PC-9 (cell line): ENCODE measurements at regions of chrX and their contacts with region 1.

Region 1: DNA sequence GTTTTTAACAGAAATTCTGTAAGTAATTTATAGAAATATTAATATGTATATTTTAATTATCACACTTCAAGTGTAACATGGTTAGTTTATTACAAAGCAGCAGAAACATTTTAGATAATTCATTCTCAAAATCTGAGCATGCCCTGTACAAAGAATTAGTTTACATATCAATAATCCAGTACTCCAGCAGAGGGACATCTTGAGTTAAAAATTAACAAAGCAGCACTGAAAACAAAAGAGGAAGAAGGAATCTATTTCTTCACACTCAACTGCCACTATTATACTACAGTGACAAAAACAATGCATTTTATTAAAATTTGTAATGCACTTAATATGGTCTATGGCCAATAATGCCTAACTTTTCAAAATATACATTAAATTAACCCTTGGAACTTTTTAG is 179.1 kb upstream of the KLHL4 start:
- DNase-seq: no peak
- H3K4me3 ChIP-seq: no peak overlapping the region
- H3K27ac ChIP-seq: no peak overlapping the region
- H3K4me1 ChIP-seq: no peaks in the 10 kb centered on the region
- H3K27me3 ChIP-seq: no peaks in the 10 kb centered on the region
- CTCF ChIP-seq: peak; percentile 32; the same call in 1 of the 2 replicates

Region 2: GRCh38 chrX:87299563-87300160 is 38.8 kb before region 1 on chrX:
- CTCF ChIA-PET with region 1: no interaction called
- POLR2A ChIA-PET with region 1: no interaction called
- intact Hi-C with region 1: no loop called
- DNase-seq: no peak
- H3K4me3 ChIP-seq: no peak overlapping the region
- H3K27ac ChIP-seq: no peak overlapping the region
- H3K4me1 ChIP-seq: no peaks in the 10 kb centered on the region
- H3K27me3 ChIP-seq: no peaks in the 10 kb centered on the region
- CTCF ChIP-seq: peak; percentile 64

Region 3: DNA sequence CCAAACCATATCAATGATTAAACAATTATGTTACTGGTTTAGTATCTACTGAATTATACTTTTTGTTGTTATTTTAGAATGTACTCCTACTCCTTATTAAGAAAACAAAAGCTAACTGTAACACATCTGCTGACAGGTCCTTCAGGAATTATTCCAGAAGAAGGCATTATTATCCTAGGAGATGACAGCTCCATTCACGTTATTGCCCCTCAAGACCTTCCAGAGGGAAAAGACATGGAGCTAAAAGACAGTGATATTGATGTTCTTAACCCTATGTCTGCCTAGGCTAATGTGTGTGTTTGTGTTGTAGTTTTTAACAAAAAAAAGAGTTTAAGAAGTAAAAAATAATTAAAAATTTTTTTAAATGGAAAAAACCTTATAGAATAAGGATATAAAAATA is 27.7 kb before region 1 on chrX:
- CTCF ChIA-PET with region 1: no interaction called
- POLR2A ChIA-PET with region 1: no interaction called
- intact Hi-C with region 1: no loop called
- DNase-seq: no peak
- H3K4me3 ChIP-seq: no peak overlapping the region
- H3K27ac ChIP-seq: no peak overlapping the region
- H3K4me1 ChIP-seq: no peaks in the 10 kb centered on the region
- H3K27me3 ChIP-seq: no peaks in the 10 kb centered on the region
- CTCF ChIP-seq: no peak

Region 4: GRCh38 chrX:87583679-87584078 is 245.2 kb after region 1 on chrX:
- CTCF ChIA-PET with region 1: no interaction called
- POLR2A ChIA-PET with region 1: no interaction called
- intact Hi-C with region 1: loop called (anchors 5 kb)
- DNase-seq: peak in 1 of 2 experiments; percentile 2
- H3K4me3 ChIP-seq: no peak overlapping the region
- H3K27ac ChIP-seq: no peak overlapping the region
- H3K4me1 ChIP-seq: no peaks in the 10 kb centered on the region
- H3K27me3 ChIP-seq: no peaks in the 10 kb centered on the region
- CTCF ChIP-seq: peak; percentile 65

Region 5: GRCh38 chrX:87664381-87664780 is 325.9 kb after region 1 on chrX:
- CTCF ChIA-PET with region 1: interaction called, 3 read pairs
- POLR2A ChIA-PET with region 1: no interaction called
- intact Hi-C with region 1: loop called (anchors 1 kb)
- DNase-seq: no peak
- H3K4me3 ChIP-seq: no peak overlapping the region
- H3K27ac ChIP-seq: no peak overlapping the region
- H3K4me1 ChIP-seq: no peaks in the 10 kb centered on the region
- H3K27me3 ChIP-seq: no peaks in the 10 kb centered on the region
- CTCF ChIP-seq: peak; percentile 62

Region 6: DNA sequence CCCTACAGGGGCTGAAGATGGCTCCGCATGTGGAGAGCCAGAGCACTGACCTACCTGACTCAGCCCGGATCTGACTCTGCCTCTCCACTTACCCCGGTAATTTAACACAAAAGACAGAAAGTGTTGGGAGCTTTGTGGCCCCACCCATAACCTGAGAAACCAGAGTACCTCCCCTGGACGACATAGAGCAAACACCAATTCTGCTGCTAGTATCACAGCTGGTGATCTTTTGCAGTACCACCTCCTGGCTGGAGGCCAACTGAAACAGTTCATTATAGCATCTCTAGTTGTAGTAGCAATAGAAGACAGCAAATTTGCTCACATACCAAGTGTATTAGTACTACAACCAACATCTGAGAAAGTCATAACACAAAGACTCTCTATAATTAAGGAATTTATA is 623.0 kb after region 1 on chrX:
- CTCF ChIA-PET with region 1: no interaction called
- POLR2A ChIA-PET with region 1: no interaction called
- intact Hi-C with region 1: no loop called
- DNase-seq: no peak
- H3K4me3 ChIP-seq: no peak overlapping the region
- H3K27ac ChIP-seq: no peak overlapping the region
- H3K4me1 ChIP-seq: no peaks in the 10 kb centered on the region
- H3K27me3 ChIP-seq: no peaks in the 10 kb centered on the region
- CTCF ChIP-seq: no peak